Heart right ventricle (tissue), 16 donors: ENCODE measurements at regions of chr14 and their contacts with region 1.

Region 1: GRCh38 chr14:50736932-50737419 is 68.9 kb upstream of the SAV1 start:
- DNase-seq: no peak
- ATAC-seq: peak in 1 of 8 donors; percentile 22
- H3K4me3 ChIP-seq: no peak overlapping the region
- H3K27ac ChIP-seq: peak overlapping the region in 1 of 10 donors; percentile 20
- H3K4me1 ChIP-seq: peaks cover 0 to 30% (median 12%) of the 10 kb centered on the region in 9 donors
- H3K27me3 ChIP-seq: no peaks in the 10 kb centered on the region
- CTCF ChIP-seq: no peak

Region 2: GRCh38 chr14:49820176-49820575 is 916.8 kb before region 1 on chr14:
- intact Hi-C with region 1: loop called in 1 of 10 experiments (anchors 10 kb)
- DNase-seq: no peak
- ATAC-seq: no peak
- H3K4me3 ChIP-seq: no peak overlapping the region
- H3K27ac ChIP-seq: no peak overlapping the region
- H3K4me1 ChIP-seq: no peaks in the 10 kb centered on the region
- H3K27me3 ChIP-seq: no peaks in the 10 kb centered on the region
- CTCF ChIP-seq: no peak

Region 3: GRCh38 chr14:50619556-50620141 is 117.3 kb before region 1 on chr14:
- intact Hi-C with region 1: no loop called
- DNase-seq: no peak
- ATAC-seq: peak in 4 of 8 donors; percentile 24 to 58 (median 48)
- H3K4me3 ChIP-seq: no peak overlapping the region
- H3K27ac ChIP-seq: no peak overlapping the region
- H3K4me1 ChIP-seq: peaks cover 0 to 8% (median 0%) of the 10 kb centered on the region in 9 donors
- H3K27me3 ChIP-seq: no peaks in the 10 kb centered on the region
- CTCF ChIP-seq: peak; percentile 32 to 72 (median 63)

Region 4: GRCh38 chr14:50835280-50835679 is 98.3 kb after region 1 on chr14:
- intact Hi-C with region 1: no loop called
- DNase-seq: no peak
- ATAC-seq: no peak
- H3K4me3 ChIP-seq: no peak overlapping the region
- H3K27ac ChIP-seq: no peak overlapping the region
- H3K4me1 ChIP-seq: peaks cover 0 to 12% (median 0%) of the 10 kb centered on the region in 9 donors
- H3K27me3 ChIP-seq: peaks cover 0 to 6% (median 0%) of the 10 kb centered on the region in 7 donors
- CTCF ChIP-seq: no peak

Region 5: GRCh38 chr14:51593397-51593796 is 856.4 kb after region 1 on chr14:
- intact Hi-C with region 1: loop called in 1 of 10 experiments (anchors 5 kb)
- DNase-seq: no peak
- ATAC-seq: no peak
- H3K4me3 ChIP-seq: no peak overlapping the region
- H3K27ac ChIP-seq: no peak overlapping the region
- H3K4me1 ChIP-seq: no peaks in the 10 kb centered on the region
- H3K27me3 ChIP-seq: peaks cover 0 to 6% (median 0%) of the 10 kb centered on the region in 7 donors
- CTCF ChIP-seq: no peak